Activated T-helper 2 cell treated with anti-CD3 and anti-CD28 coated beads, Interferon-gamma antibody, Interleukin-2, Interleukin-4, amounts not matched to agents 10 μg/mL and 5 μg/mL and 100 μg/mL, durations not matched to agents 14 hours and 24 hours and 36 hours (primary cell): ENCODE measurements at regions of chr5 and their contacts with region 1.

Region 1: DNA sequence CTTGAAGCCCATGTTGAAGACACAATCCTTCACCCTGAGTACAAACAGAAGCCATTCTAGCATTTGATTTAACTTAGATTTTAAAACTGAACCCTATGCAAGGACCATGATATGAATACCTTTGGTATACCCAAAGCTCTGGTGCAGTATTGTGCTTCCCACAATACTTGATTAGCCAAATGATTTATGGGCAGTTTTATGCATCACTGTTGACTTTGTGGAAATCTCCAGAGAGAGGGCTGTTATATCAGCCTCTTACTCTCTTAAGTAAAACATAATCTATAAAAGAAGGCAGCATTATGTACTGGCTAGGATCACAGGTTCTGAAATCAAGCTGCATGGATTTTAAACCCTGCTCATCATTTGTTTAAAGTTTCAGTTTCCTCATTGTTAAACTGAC is 762.8 kb downstream of the EFNA5 start:
- DNase-seq: no peak
- H3K4me3 Mint-ChIP-seq: no peak overlapping the region
- H3K27ac Mint-ChIP-seq: no peak overlapping the region
- H3K4me1 Mint-ChIP-seq: no peaks in the 10 kb centered on the region
- H3K27me3 Mint-ChIP-seq: no peaks in the 10 kb centered on the region

Region 2: GRCh38 chr5:106843812-106844416 is 64.1 kb before region 1 on chr5:
- intact Hi-C with region 1: no loop called
- DNase-seq: no peak
- H3K4me3 Mint-ChIP-seq: no peak overlapping the region
- H3K27ac Mint-ChIP-seq: no peak overlapping the region
- H3K4me1 Mint-ChIP-seq: no peaks in the 10 kb centered on the region
- H3K27me3 Mint-ChIP-seq: no peaks in the 10 kb centered on the region

Region 3: GRCh38 chr5:106894964-106895363 is 13.0 kb before region 1 on chr5:
- intact Hi-C with region 1: loop called (anchors 1 kb)
- DNase-seq: no peak
- H3K4me3 Mint-ChIP-seq: no peak overlapping the region
- H3K27ac Mint-ChIP-seq: no peak overlapping the region
- H3K4me1 Mint-ChIP-seq: no peaks in the 10 kb centered on the region
- H3K27me3 Mint-ChIP-seq: no peaks in the 10 kb centered on the region

Region 4: GRCh38 chr5:106940301-106940846 is 32.4 kb after region 1 on chr5:
- intact Hi-C with region 1: no loop called
- DNase-seq: no peak
- H3K4me3 Mint-ChIP-seq: no peak overlapping the region
- H3K27ac Mint-ChIP-seq: no peak overlapping the region
- H3K4me1 Mint-ChIP-seq: no peaks in the 10 kb centered on the region
- H3K27me3 Mint-ChIP-seq: no peaks in the 10 kb centered on the region